CD8-positive, alpha-beta T cell (primary cell): ENCODE measurements at regions of chr20 and their contacts with region 1.

Region 1: DNA sequence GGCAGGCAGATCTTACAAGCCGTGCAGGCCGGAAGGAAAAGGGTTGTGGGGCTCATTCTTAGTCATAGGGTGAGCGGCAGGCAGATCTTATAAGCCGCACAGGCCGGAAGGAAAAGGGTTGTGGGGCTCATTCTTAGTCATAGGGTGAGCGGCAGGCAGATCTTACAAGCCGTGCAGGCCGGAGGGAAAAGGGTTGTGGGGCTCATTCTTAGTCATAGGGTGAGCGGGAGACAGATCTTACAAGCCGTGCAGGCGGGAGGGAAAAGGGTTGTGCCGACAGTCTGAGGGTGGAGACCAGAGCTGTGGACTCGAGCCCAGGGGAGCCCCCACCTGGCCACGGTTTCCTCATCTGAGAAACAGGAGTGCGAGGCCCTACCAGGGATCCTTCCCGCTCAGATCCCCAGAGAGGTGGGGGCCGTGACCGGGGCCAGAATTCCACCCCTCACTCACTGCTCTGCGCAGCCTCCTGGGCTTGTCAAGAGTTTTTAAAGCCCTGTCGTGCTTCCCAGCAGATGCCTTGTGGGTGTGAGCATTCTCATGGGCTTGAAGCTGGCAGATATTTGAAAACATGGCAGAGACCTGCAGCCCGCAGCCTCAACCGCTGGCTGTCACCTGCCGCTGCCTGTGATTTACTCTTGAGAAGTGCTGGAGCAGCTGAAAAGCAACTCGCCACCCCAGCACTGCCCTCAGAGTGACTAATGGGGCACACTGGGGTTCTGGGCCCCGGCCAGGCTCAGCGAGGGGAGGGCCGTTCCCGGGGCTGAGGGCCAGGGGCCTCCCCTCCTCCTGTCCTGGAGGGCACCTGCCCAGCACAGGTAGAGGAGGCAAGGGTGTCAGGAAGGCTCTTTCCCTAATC is 31.9 kb downstream of the NTSR1 start:
- DNase-seq: peak; percentile 55 to 93 (median 83)
- ATAC-seq: peak; percentile 80
- H3K4me3 ChIP-seq: peak overlapping the region; percentile 34 to 50
- H3K4me3 Mint-ChIP-seq: peak overlapping the region; percentile 74
- H3K27ac ChIP-seq: peak overlapping the region; percentile 72 to 87
- H3K27ac Mint-ChIP-seq: peak overlapping the region; percentile 88
- H3K4me1 ChIP-seq: peaks cover 47% of the 10 kb centered on the region
- H3K4me1 Mint-ChIP-seq: peaks cover 38% of the 10 kb centered on the region
- H3K27me3 ChIP-seq: no peaks in the 10 kb centered on the region
- H3K27me3 Mint-ChIP-seq: peaks cover 5% of the 10 kb centered on the region
- CTCF ChIP-seq: no peak

Region 2: DNA sequence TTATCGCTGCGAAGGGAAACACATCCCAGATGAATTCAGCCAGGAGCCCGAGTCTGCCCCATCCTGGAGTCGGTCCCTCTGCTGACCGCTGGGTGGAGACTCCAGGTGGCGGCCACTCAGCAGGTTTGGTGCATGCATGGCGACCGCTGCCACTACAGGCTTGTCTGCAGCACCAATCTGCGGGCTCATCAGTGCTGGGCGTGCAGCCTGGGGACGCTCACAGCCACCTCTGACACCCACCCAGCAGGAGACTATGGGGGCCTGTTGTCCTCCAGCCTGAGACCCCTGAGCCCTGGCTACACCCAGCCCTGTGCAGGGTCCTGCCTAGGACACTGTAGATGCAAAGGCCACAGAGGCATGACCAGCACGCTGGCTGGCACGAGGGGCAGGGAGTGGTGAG is 224.2 kb before region 1 on chr20:
- CTCF ChIA-PET with region 1: no interaction called
- POLR2A ChIA-PET with region 1: no interaction called
- intact Hi-C with region 1: no loop called
- DNase-seq: no peak
- ATAC-seq: no peak
- H3K4me3 ChIP-seq: no peak overlapping the region
- H3K4me3 Mint-ChIP-seq: no peak overlapping the region
- H3K27ac ChIP-seq: no peak overlapping the region
- H3K27ac Mint-ChIP-seq: no peak overlapping the region
- H3K4me1 ChIP-seq: peaks cover 17% of the 10 kb centered on the region
- H3K4me1 Mint-ChIP-seq: peaks cover 7% of the 10 kb centered on the region
- H3K27me3 ChIP-seq: peaks cover 4 to 9% of the 10 kb centered on the region in 2 experiments
- H3K27me3 Mint-ChIP-seq: peaks cover 10% of the 10 kb centered on the region
- CTCF ChIP-seq: no peak

Region 3: DNA sequence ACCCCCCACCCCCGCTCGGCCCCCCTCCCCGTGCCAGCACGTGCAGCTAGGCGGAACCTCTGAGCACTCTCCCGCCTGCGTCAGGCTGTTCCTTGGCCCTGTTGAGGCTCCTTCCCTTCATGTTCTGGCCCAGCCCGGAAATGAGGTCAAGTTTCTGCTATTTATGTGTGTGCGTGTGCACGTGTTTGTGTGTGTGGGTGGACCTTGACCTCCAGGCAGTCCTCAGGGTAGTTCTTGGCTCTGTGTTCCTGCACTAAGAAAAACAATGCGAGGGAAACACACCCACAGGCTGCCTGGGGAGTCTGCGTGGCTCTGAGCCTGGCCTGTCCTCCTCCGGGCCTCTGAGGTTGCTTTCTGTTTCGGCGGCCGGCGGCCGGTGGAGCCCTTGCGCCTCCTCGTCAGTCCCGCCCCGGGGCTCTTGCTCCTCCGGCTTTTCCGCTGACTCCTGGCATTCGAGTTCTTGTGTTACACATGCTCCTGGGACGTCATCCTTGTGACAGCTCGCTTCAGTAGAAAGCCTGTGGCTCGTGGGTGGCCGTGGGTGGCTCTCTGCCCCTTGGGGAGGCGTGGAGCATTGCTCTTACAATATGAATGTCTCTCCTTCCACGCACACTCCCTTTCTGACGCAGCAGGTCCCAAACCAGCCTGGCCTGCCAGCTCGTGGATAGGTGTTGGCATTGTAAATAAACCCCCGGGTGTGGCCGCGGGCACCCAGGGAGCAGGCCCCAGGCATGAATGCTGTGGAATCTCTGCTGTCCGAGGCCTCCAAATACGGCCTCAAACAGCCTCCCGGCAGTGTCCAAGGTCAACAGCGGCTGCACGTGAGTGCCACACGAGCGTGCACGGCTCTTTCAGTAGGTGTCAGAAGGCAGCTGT is 88.2 kb before region 1 on chr20:
- CTCF ChIA-PET with region 1: no interaction called
- POLR2A ChIA-PET with region 1: interaction called, 3 read pairs
- intact Hi-C with region 1: loop called in 1 of 2 experiments (anchors 1 kb)
- DNase-seq: peak; percentile 44 to 88 (median 75)
- ATAC-seq: peak; percentile 59
- H3K4me3 ChIP-seq: peak overlapping the region; percentile 29 to 35
- H3K4me3 Mint-ChIP-seq: peak overlapping the region; percentile 80
- H3K27ac ChIP-seq: peak overlapping the region; percentile 82 to 83
- H3K27ac Mint-ChIP-seq: peak overlapping the region; percentile 97
- H3K4me1 ChIP-seq: peaks cover 24% of the 10 kb centered on the region
- H3K4me1 Mint-ChIP-seq: peaks cover 31% of the 10 kb centered on the region
- H3K27me3 ChIP-seq: no peaks in the 10 kb centered on the region
- H3K27me3 Mint-ChIP-seq: no peaks in the 10 kb centered on the region
- CTCF ChIP-seq: no peak

Region 4: GRCh38 chr20:62668441-62669027 is 72.0 kb before region 1 on chr20:
- CTCF ChIA-PET with region 1: interaction called, 3 read pairs
- POLR2A ChIA-PET with region 1: no interaction called
- intact Hi-C with region 1: loop called in 1 of 2 experiments (anchors 1 kb)
- DNase-seq: peak in 7 of 9 experiments; percentile 11 to 67 (median 49)
- ATAC-seq: peak; percentile 53
- H3K4me3 ChIP-seq: no peak overlapping the region
- H3K4me3 Mint-ChIP-seq: no peak overlapping the region
- H3K27ac ChIP-seq: no peak overlapping the region
- H3K27ac Mint-ChIP-seq: no peak overlapping the region
- H3K4me1 ChIP-seq: no peaks in the 10 kb centered on the region
- H3K4me1 Mint-ChIP-seq: no peaks in the 10 kb centered on the region
- H3K27me3 ChIP-seq: no peaks in the 10 kb centered on the region
- H3K27me3 Mint-ChIP-seq: no peaks in the 10 kb centered on the region
- CTCF ChIP-seq: peak; percentile 52

Region 5: DNA sequence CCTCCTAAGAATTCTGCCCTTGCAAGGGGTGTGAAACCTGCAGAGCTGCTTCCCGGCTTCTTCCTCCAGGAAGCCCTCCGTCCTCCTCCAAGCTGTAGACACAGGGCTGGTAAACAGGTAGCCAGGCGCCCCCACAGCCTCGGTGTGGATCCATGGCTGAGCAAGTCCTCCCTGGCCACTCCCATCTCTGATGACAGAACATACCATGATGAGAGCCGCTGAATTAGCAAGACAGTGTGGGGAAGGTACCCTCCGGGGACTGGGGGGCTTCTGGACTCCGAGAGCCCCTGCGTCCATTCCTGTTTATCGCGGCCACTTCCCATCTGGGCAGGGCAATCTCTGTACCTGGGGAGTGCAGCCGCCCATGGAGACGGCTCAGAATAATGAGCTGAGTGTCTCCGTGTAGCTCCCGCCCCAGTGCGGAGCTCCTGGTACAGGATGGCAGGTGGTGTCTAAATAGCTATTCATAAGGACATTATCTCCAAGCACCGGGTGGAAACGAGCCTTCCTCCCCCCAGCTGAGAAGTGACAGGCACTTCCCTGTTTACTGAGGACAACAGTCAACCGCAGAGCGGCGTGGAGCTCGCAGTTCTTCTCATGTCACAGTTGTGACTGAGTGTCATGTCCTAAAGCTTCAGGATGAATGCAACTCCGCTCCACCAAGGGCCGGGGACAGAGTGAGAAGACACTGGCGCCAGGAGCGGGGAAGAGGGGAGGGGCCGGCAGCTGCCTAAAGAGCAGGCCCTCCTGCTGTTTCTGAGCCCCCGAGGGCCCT is 54.5 kb before region 1 on chr20:
- CTCF ChIA-PET with region 1: no interaction called
- POLR2A ChIA-PET with region 1: no interaction called
- intact Hi-C with region 1: no loop called
- DNase-seq: peak in 2 of 9 experiments; percentile 24 to 35
- ATAC-seq: no peak
- H3K4me3 ChIP-seq: no peak overlapping the region
- H3K4me3 Mint-ChIP-seq: no peak overlapping the region
- H3K27ac ChIP-seq: no peak overlapping the region
- H3K27ac Mint-ChIP-seq: no peak overlapping the region
- H3K4me1 ChIP-seq: peaks cover 9% of the 10 kb centered on the region
- H3K4me1 Mint-ChIP-seq: peaks cover 4% of the 10 kb centered on the region
- H3K27me3 ChIP-seq: peaks cover 0 to 5% of the 10 kb centered on the region in 2 experiments
- H3K27me3 Mint-ChIP-seq: peaks cover 9% of the 10 kb centered on the region
- CTCF ChIP-seq: no peak

Region 6: GRCh38 chr20:62716198-62716940 is 24.1 kb before region 1 on chr20:
- CTCF ChIA-PET with region 1: no interaction called
- POLR2A ChIA-PET with region 1: no interaction called
- intact Hi-C with region 1: loop called in 1 of 2 experiments (anchors 1 kb)
- DNase-seq: peak in 8 of 9 experiments; percentile 37 to 78 (median 62)
- ATAC-seq: peak; percentile 98
- H3K4me3 ChIP-seq: peak overlapping the region in 1 of 2 experiments; percentile 15
- H3K4me3 Mint-ChIP-seq: peak overlapping the region; percentile 55
- H3K27ac ChIP-seq: peak overlapping the region in 1 of 2 experiments; percentile 64
- H3K27ac Mint-ChIP-seq: peak overlapping the region; percentile 92
- H3K4me1 ChIP-seq: peaks cover 26% of the 10 kb centered on the region
- H3K4me1 Mint-ChIP-seq: peaks cover 23% of the 10 kb centered on the region
- H3K27me3 ChIP-seq: no peaks in the 10 kb centered on the region
- H3K27me3 Mint-ChIP-seq: no peaks in the 10 kb centered on the region
- CTCF ChIP-seq: no peak

Region 7: DNA sequence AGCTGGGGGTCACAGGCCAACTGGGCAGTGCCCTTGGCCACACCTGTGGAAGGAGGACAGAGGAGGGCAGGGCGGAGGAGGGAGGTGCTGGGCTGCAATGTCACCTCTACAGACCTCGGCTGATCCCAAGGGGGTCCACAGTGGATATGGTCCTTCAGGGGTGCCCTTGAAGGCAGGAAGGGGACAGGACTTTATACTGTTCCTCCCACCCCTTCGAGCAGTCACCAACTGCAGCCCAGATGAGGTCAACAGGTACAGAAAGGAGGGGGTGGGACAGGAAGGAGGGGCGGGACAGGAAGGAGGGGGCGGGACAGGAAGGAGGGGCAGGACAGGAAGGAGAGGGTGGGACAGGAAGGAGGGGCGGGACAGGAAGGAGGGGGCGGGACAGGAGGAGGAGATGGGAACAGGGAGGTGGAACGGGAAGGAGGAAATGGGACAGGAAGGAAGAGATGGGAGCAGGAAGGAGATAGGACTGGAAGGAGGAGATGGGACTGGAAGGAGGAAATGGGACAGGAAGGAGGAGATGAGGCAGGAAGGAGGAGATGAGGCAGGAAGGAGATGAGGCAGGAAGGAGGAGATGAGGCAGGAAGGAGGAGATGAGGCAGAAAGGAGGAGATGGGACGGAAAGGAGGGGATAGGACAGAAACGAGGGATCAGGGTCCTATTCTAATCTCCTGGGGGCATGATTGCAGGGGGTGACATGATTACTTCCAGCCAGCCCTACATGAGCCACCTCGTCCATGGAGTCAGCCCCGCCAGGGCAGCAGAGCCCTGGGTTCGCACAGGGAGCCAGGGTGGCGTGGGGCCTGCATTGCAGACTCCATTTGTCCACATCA is 36.4 kb after region 1 on chr20:
- CTCF ChIA-PET with region 1: no interaction called
- POLR2A ChIA-PET with region 1: interaction called, 5 read pairs
- intact Hi-C with region 1: loop called (anchors 1 to 5 kb)
- DNase-seq: peak in 8 of 9 experiments; percentile 40 to 84 (median 70)
- ATAC-seq: peak; percentile 95
- H3K4me3 ChIP-seq: peak overlapping the region; percentile 31 to 58
- H3K4me3 Mint-ChIP-seq: peak overlapping the region; percentile 66
- H3K27ac ChIP-seq: peak overlapping the region; percentile 71 to 89
- H3K27ac Mint-ChIP-seq: peak overlapping the region; percentile 93
- H3K4me1 ChIP-seq: peaks cover 50% of the 10 kb centered on the region
- H3K4me1 Mint-ChIP-seq: peaks cover 51% of the 10 kb centered on the region
- H3K27me3 ChIP-seq: no peaks in the 10 kb centered on the region
- H3K27me3 Mint-ChIP-seq: no peaks in the 10 kb centered on the region
- CTCF ChIP-seq: no peak

Region 8: DNA sequence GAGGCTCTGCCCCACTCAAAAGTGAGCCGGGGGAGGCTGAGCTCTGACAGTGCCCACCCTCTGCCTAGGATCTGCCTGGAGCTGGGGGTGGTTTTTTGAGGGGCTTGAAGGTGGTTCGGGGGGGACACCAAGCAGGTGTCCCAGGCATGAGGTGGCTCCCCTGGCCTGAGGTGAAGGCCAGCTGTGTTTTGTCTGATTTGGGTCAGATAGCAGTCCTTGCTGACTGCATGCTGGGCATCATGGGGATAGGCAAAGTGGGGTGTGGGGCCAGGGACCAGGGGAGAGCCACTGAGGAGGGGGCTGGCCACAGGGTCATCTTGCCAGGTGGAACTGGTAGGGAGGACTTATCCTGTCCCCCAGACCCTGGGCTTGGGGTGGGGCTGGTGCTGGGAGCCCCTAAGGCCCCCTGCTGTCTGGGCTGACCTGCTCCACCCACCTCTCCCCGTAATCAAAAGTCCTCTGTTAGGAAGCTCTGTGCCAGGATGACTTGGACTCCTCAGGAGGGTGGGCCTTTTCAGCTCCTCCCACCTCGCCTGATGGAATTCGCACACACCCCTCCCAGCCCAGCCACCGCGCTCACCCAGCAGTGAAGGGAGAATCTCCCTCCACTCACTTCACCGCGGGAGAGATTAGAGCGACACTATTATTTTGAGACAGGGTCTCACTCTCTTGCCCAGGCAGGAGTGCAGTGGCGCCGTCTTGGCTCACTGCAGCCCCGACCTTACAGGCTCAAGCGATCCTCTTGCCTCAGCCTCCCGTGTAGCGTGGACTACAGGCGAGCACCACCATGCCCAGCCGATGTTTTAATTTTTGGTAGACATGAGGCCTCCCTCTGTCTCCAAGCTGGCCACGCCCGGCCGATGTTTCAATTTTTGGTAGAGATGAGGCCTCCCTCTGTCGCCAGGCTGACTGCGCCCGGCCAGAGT is 74.8 kb after region 1 on chr20:
- CTCF ChIA-PET with region 1: no interaction called
- POLR2A ChIA-PET with region 1: no interaction called
- intact Hi-C with region 1: no loop called
- DNase-seq: no peak
- ATAC-seq: no peak
- H3K4me3 ChIP-seq: no peak overlapping the region
- H3K4me3 Mint-ChIP-seq: peak overlapping the region; percentile 47
- H3K27ac ChIP-seq: no peak overlapping the region
- H3K27ac Mint-ChIP-seq: peak overlapping the region; percentile 60
- H3K4me1 ChIP-seq: peaks cover 15% of the 10 kb centered on the region
- H3K4me1 Mint-ChIP-seq: peaks cover 9% of the 10 kb centered on the region
- H3K27me3 ChIP-seq: peaks cover 11 to 28% of the 10 kb centered on the region in 2 experiments
- H3K27me3 Mint-ChIP-seq: peaks cover 17% of the 10 kb centered on the region
- CTCF ChIP-seq: no peak